ENCODE measurements at regions of chr22 and their contacts with region 1.

Region 1: GRCh38 chr22:24005201-24005600 is at the start of gene GSTT4:
- DNase-seq: no peak
- ATAC-seq: no peak
- H3K4me3 ChIP-seq: no peak within 1 kb of the TSS
- H3K27ac ChIP-seq: no peak within 1 kb of the TSS
- H3K4me1 ChIP-seq: no peaks in the 10 kb centered on the region
- H3K27me3 ChIP-seq: no peaks in the 10 kb centered on the region
- CTCF ChIP-seq: no peak
- EP300 ChIP-seq: no peak
- POLR2A ChIP-seq: no peak
- RAD21 ChIP-seq: no peak
- polyA plus RNA-seq, gene GSTT4: not detected

Region 2: GRCh38 chr22:23938328-23939016 is 66.7 kb before region 1 on chr22:
- CTCF ChIA-PET with region 1: no interaction called
- POLR2A ChIA-PET with region 1: no interaction called
- RAD21 ChIA-PET with region 1: no interaction called
- SMC1A ChIA-PET with region 1: no interaction called
- in situ Hi-C with region 1: loop called (anchors 5 kb)
- intact Hi-C with region 1: loop called (anchors 10 kb)
- DNase-seq: no peak
- ATAC-seq: no peak
- H3K4me3 ChIP-seq: no peak overlapping the region
- H3K27ac ChIP-seq: no peak overlapping the region
- H3K4me1 ChIP-seq: no peaks in the 10 kb centered on the region
- H3K27me3 ChIP-seq: no peaks in the 10 kb centered on the region
- CTCF ChIP-seq: no peak
- EP300 ChIP-seq: no peak
- POLR2A ChIP-seq: no peak
- RAD21 ChIP-seq: no peak

Region 3: DNA sequence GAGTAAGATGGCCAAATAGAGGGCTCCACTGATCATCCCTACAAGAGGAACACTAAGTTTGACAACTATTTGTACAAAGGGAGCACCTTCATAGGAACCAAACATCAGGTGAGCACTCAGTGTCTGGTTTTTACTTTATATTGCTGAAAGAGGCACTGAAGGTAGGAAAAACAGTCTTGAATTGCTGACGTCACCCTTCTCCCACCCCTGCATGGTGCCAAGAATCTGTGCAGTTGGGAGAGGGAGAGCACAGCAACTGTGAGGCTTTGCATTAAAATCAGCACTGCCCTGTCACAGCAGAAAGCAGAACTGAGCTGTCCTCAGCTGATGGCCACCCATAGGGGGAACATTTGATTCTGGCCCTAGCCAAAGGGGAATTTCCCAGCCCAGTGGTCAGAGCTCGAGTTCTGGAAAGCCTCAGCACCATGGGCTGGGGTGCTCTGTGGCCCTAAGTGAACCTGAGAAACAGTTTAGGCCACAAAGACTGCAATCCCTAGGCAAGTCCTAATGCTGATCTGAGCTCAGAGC is 731.4 kb after region 1 on chr22:
- CTCF ChIA-PET with region 1: no interaction called
- POLR2A ChIA-PET with region 1: no interaction called
- RAD21 ChIA-PET with region 1: no interaction called
- SMC1A ChIA-PET with region 1: no interaction called
- in situ Hi-C with region 1: no loop called
- intact Hi-C with region 1: no loop called
- DNase-seq: no peak
- ATAC-seq: peak; percentile 76
- H3K4me3 ChIP-seq: no peak overlapping the region
- H3K27ac ChIP-seq: no peak overlapping the region
- H3K4me1 ChIP-seq: no peaks in the 10 kb centered on the region
- H3K27me3 ChIP-seq: no peaks in the 10 kb centered on the region; a peak in 1 of 4 replicates
- CTCF ChIP-seq: no peak
- EP300 ChIP-seq: no peak
- POLR2A ChIP-seq: no peak
- RAD21 ChIP-seq: no peak

Measured in GM12878 (cell line).